ENCODE measurements at regions of chr11 and their contacts with region 1.

Region 1: GRCh38 chr11:46308631-46309419 is 31.4 kb downstream of the CREB3L1 start:
- ATAC-seq: peak; percentile 76 to 94 (median 85)
- H3K4me3 ChIP-seq: no peak overlapping the region
- H3K27ac ChIP-seq: no peak overlapping the region
- H3K4me1 ChIP-seq: no peaks in the 10 kb centered on the region

Region 2: GRCh38 chr11:45804761-45805304 is 504.0 kb before region 1 on chr11 and contains the start of gene SLC35C1:
- in situ Hi-C with region 1: no loop called
- ATAC-seq: peak; percentile 65 to 91 (median 86)
- H3K4me3 ChIP-seq: peak within 1 kb of the TSS; percentile 58 to 79 (median 62)
- H3K27ac ChIP-seq: peak within 1 kb of the TSS; percentile 80 to 92
- H3K4me1 ChIP-seq: peaks cover 20 to 22% of the 10 kb centered on the region in 2 donors
- total RNA-seq, gene SLC35C1: 4.5 to 27.2 (median 7.1) TPM

Region 3: DNA sequence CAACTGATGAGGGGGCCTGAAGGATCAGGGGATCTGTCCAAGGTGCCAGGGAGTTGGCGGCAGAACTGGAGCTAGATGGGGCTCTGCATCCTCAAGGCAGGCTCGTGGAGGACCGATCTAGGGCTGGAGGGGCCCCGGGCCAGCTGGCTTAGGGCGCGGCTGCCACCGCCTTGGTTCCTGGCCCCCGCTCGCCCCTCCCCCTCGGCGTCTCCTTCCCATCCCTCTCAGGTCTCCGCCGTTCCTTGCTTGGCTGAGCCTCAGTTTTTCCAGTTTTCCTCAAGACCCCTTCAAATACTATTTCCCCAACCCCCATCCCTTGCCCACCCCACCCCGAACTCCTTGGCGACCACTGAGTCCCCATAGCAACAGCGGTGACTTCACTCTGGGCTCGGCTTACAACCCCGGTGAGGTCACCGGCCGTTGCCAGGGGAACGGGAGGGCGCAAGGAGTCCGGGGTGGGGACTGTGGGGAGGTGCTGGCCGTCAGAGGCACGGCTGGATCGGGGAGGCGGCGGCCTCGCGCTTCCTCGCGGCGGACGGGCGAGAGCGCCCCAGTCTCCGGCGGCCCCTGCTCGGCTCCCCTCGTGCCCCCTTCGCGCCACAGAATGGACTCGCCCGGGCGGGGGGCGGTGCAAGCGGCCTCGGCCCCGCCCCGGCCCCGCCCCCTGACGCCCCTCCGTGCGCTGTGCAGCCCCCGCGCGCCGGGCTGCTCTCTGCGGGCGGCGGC is 409.2 kb before region 1 on chr11:
- in situ Hi-C with region 1: loop called in 1 of 9 experiments (anchors 25 kb)
- ATAC-seq: peak; percentile 87 to 95 (median 91)
- H3K4me3 ChIP-seq: peak overlapping the region; percentile 34 to 72 (median 48)
- H3K27ac ChIP-seq: peak overlapping the region; percentile 80 to 81
- H3K4me1 ChIP-seq: peaks cover 30 to 38% of the 10 kb centered on the region in 2 donors

Measured in motor neuron (in vitro differentiated cells).